Activated CD8-positive, alpha-beta T cell treated with anti-CD3 and anti-CD28 coated beads for 36 hours (primary cell): ENCODE measurements at regions of chr1 and their contacts with region 1.

Region 1: DNA sequence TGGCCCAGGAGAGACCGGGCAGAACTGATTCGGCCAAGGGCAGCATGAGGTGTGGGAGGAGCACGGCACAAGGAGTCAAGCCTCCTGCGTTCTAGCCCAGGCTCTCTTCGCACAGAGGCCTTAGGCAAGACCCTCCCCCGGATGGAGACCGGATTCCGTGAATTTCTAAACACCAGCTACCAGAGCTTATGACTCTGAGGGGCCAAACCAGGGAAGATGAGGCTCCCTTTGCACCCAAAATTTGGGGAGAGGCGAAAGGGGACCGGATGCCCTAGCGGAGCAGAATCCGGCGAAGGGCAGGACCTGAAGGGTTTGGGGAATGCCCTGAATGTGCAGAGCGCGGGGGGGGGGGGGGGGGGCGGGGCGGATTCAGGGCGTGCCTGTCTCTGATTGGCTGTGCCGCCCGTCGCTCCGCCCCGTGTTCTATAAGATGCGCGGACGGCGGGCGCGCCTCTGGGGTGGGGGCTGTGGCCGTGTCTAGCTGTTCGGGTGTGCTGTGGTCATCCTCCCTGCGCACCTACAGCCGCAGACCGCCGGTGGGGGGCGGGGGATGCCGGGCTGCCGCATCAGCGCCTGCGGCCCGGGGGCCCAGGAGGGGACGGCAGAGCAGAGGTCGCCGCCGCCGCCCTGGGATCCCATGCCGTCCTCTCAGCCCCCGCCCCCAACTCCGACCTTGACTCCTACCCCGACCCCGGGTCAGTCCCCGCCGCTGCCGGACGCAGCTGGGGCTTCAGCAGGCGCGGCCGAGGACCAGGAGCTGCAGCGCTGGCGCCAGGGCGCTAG is at the start of gene TRNP1:
- DNase-seq: peak; percentile 79
- ATAC-seq: peak; percentile 68
- H3K4me3 Mint-ChIP-seq: peak within 1 kb of the TSS; percentile 74
- H3K27ac Mint-ChIP-seq: peak within 1 kb of the TSS; percentile 30
- H3K4me1 Mint-ChIP-seq: peaks cover 21% of the 10 kb centered on the region
- H3K27me3 Mint-ChIP-seq: peaks cover 49% of the 10 kb centered on the region
- CTCF ChIP-seq: no peak
- total RNA-seq, gene TRNP1: 0.16 to 0.38 TPM

Region 2: GRCh38 chr1:27010989-27011764 is 17.7 kb after region 1 on chr1:
- CTCF ChIA-PET with region 1: interaction called, 53 read pairs
- POLR2A ChIA-PET with region 1: no interaction called
- intact Hi-C with region 1: no loop called
- DNase-seq: no peak
- ATAC-seq: no peak
- H3K4me3 Mint-ChIP-seq: no peak overlapping the region
- H3K27ac Mint-ChIP-seq: no peak overlapping the region
- H3K4me1 Mint-ChIP-seq: no peaks in the 10 kb centered on the region
- H3K27me3 Mint-ChIP-seq: peaks cover 20% of the 10 kb centered on the region
- CTCF ChIP-seq: no peak

Region 3: DNA sequence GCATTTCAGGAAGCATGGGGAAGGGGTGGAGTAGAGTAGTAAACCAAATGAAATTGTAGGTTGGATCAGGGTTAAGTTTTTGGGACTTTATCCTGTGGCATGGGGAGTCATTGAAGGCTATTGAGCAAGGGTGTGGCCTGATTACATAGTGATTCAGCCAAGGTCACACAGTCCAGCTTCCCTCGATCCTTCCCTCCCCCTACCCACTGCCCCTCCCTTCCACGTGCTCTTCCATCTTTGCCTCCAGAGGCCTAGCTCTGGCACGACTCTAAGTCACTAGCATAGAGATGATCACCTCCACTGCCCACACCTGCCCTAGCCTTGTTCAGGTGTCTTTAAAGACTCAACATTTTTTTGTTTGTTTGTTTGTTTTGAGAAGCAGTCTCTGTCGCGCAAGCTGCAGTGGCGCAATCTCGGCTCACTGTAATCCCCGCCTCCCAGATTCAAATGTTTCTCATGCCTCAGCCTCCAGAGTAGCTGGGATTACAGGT is 198.7 kb after region 1 on chr1:
- CTCF ChIA-PET with region 1: no interaction called
- POLR2A ChIA-PET with region 1: no interaction called
- intact Hi-C with region 1: no loop called
- DNase-seq: no peak
- ATAC-seq: no peak
- H3K4me3 Mint-ChIP-seq: no peak overlapping the region
- H3K27ac Mint-ChIP-seq: no peak overlapping the region
- H3K4me1 Mint-ChIP-seq: no peaks in the 10 kb centered on the region
- H3K27me3 Mint-ChIP-seq: no peaks in the 10 kb centered on the region
- CTCF ChIP-seq: no peak